ENCODE measurements at regions of chr6 and their contacts with region 1.

Region 1: GRCh38 chr6:99330159-99330558 is 19.3 kb downstream of the FAXC start:
- DNase-seq: peak; percentile 52
- ATAC-seq: peak; percentile 88
- H3K4me3 ChIP-seq: no peak overlapping the region
- H3K27ac ChIP-seq: no peak overlapping the region
- H3K4me1 ChIP-seq: peaks cover 5% of the 10 kb centered on the region; the same call in 1 of the 2 replicates
- H3K27me3 ChIP-seq: no peaks in the 10 kb centered on the region
- CTCF ChIP-seq: peak; percentile 64
- EP300 ChIP-seq: no peak
- POLR2A ChIP-seq: no peak
- RAD21 ChIP-seq: 0 out of 2 replicates have a peak, but pooled peaks have one; percentile 21

Region 2: DNA sequence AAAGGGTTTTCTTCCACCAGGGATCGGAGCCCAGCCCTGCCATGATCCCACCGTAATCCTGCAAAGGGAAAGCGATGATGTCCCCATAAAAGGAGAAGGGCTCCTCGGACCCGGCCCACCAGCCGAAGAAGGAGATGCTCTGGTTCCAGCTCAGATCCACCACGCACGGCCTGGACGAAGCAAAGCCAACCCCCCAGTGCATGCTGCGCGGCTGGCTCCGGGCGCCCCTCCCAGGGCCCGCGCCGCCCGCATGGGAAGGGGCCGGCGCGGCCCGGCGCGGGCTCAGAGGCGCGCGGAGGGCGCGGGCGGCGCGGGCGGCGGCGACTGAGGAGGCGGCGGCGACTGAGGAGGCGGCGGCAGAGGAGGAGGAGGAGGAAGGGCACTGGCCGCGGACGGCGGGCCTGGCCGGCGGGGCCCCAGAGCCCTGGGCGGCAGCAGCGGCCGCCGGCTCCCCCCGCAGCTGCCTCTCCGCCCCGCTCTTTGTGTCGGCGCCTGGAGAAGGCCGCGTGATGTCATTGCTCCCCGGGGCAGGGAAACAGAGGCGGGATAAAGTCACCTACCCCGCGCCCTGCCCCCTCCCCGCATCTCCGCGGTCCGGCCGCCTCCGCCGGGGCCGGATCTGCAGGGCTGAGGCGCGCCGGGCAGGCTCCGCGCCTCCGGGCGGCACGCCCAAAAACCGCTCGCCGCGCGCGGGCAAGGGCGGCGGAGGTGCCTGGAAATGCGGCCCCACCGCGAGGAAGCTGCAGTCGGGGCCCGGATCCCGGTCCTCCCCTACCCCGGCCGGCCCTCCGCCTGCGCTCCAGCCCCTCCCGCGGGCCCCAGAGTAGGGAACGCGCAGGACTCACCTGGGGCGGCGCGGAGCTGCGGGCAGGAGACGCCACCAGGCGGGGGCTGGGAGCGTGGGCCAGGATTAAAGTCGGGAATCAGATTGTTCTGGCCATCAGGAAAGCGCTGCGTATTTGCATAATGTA is 19.3 kb after region 1 on chr6 and contains the start of gene FAXC:
- CTCF ChIA-PET with region 1: no interaction called
- POLR2A ChIA-PET with region 1: no interaction called
- in situ Hi-C with region 1: no loop called
- intact Hi-C with region 1: loop called (anchors 1 kb)
- DNase-seq: peak; percentile 9
- ATAC-seq: peak; percentile 93
- H3K4me3 ChIP-seq: peak within 1 kb of the TSS; percentile 62 to 73 (median 64)
- H3K27ac ChIP-seq: no peak within 1 kb of the TSS
- H3K4me1 ChIP-seq: peaks cover 14% of the 10 kb centered on the region
- H3K27me3 ChIP-seq: peaks cover 0 to 34% of the 10 kb centered on the region in 2 experiments; a peak in 4 of 5 replicates
- CTCF ChIP-seq: peak; percentile 57
- EP300 ChIP-seq: no peak
- POLR2A ChIP-seq: no peak
- RAD21 ChIP-seq: no peak
- total RNA-seq, gene FAXC: 0.11 and 0.35 TPM in 2 replicates

Region 3: DNA sequence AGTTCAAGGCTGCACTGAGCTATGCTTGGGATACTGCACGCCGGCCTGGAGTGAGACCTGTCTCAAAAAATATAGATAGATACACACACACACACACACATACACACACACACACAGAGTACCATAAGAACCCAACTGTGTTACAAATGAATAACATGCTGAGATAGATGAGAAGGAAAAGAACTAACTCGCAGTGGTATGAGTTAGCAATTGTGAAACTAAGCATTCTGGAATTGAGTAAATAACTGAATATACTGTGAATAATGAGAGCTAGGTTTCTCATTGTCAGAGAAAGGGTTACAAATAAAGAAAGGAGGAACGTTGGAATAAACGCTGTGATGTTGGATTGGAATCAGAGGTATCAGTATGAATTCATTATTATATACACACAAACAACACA is 33.9 kb after region 1 on chr6:
- CTCF ChIA-PET with region 1: no interaction called
- POLR2A ChIA-PET with region 1: no interaction called
- in situ Hi-C with region 1: no loop called
- intact Hi-C with region 1: no loop called
- DNase-seq: no peak
- ATAC-seq: no peak
- H3K4me3 ChIP-seq: no peak overlapping the region
- H3K27ac ChIP-seq: no peak overlapping the region
- H3K4me1 ChIP-seq: no peaks in the 10 kb centered on the region
- H3K27me3 ChIP-seq: no peaks in the 10 kb centered on the region
- CTCF ChIP-seq: no peak
- EP300 ChIP-seq: no peak
- POLR2A ChIP-seq: no peak
- RAD21 ChIP-seq: no peak

Region 4: DNA sequence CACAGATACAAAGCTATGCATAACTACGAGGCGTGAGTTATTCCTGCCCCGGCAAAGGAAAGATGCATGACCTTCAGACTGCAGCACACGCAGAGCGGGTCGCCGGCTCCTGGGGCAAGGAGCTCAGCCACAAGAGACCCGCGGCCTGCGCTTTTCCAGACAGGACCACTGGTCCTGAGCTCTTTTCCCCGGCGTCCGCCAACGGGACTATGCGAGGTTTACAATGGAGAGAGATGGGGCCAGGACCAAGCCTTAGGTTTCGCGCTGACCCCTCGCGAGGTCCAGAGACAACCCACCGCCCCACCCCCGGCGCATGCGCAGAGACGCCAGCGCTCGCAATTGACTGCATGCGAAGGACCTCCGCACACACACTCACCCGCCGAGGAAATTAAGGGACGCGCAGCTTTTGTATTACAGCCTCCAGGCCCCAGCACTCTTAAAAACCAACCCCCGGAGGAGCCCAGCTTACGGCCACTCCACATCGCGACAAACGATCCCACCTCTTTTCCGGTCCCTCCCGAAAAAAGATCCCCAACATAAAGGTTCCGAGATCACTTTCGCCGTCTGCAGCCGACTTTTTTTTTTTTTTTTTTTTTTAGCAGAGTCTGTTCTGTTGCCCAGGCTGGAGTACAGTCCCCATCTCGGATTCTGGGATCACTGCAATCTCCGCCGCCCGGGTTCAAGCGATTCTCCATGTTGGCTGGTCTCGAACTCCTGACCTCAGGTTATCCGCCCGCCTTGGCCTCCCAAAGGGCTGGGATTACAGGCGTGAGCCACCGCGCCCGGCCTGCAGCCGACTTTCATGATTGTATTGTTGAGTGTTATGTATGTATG is 63.8 kb after region 1 on chr6 and contains the start of gene COQ3:
- CTCF ChIA-PET with region 1: no interaction called
- POLR2A ChIA-PET with region 1: no interaction called
- in situ Hi-C with region 1: no loop called
- intact Hi-C with region 1: loop called (anchors 5 kb)
- DNase-seq: peak; percentile 84
- ATAC-seq: peak; percentile 99
- H3K4me3 ChIP-seq: peak within 1 kb of the TSS; percentile 64 to 85 (median 67)
- H3K27ac ChIP-seq: peak within 1 kb of the TSS; percentile 82
- H3K4me1 ChIP-seq: peaks cover 19% of the 10 kb centered on the region
- H3K27me3 ChIP-seq: no peaks in the 10 kb centered on the region
- CTCF ChIP-seq: no peak
- EP300 ChIP-seq: no peak
- POLR2A ChIP-seq: peak; percentile 91 to 96
- RAD21 ChIP-seq: 0 out of 2 replicates have a peak, but pooled peaks have one; percentile 50
- total RNA-seq, gene COQ3: 20.5 and 26.6 TPM in 2 replicates

Region 5: GRCh38 chr6:99425647-99426453 is 95.7 kb after region 1 on chr6:
- CTCF ChIA-PET with region 1: no interaction called
- POLR2A ChIA-PET with region 1: interaction called, 11 read pairs
- in situ Hi-C with region 1: no loop called
- intact Hi-C with region 1: loop called (anchors 1 kb)
- DNase-seq: peak; percentile 91
- ATAC-seq: peak; percentile 77
- H3K4me3 ChIP-seq: peak overlapping the region; percentile 59 to 85 (median 84)
- H3K27ac ChIP-seq: peak overlapping the region; percentile 98
- H3K4me1 ChIP-seq: peaks cover 55% of the 10 kb centered on the region
- H3K27me3 ChIP-seq: no peaks in the 10 kb centered on the region; a peak in 1 of 5 replicates
- CTCF ChIP-seq: peak; percentile 73
- EP300 ChIP-seq: no peak
- POLR2A ChIP-seq: no peak
- RAD21 ChIP-seq: 0 out of 2 replicates have a peak, but pooled peaks have one; percentile 7

Region 6: DNA sequence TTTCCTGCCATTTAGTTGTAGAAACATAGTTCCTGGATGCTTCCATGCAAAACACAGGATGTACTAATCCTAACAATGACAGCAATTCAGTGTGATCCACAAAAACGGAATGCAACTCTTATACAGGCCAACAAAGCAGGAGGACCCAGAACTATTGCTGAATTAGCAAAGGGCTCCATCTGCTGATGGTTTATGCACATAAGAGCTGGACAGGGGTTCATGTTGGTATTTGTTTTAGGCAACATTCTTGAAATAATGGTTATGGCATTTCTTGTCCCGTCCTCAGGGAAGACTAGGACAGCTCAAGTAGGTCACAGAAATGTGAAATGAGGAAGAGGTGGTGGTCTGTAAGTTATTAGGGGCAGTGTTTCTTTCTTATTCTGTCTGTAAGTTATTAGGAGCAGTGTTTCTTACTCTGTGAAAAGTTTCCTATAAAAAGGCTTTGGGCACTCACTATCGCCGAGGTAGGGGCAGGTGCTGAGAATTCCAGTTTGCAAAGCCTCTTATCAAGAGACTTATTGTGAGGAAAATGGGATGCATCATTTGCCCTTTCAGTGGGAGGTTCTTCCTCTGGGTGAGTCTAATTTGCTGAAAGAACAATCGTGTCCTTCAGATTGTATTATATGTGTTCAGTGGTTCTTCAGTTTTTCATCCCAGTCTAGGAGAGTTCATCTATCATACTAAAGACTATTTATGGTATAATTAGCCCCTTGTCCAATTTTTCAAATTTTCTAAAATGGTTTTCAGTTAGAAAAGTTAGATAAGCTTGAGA is 492.8 kb after region 1 on chr6:
- CTCF ChIA-PET with region 1: no interaction called
- POLR2A ChIA-PET with region 1: no interaction called
- in situ Hi-C with region 1: loop called (anchors 25 kb)
- intact Hi-C with region 1: loop called (anchors 5 kb)
- DNase-seq: peak; percentile 64
- ATAC-seq: peak; percentile 99
- H3K4me3 ChIP-seq: peak overlapping the region in 1 of 3 experiments; percentile 23; a peak in 2 of 6 replicates
- H3K27ac ChIP-seq: no peak overlapping the region
- H3K4me1 ChIP-seq: peaks cover 7% of the 10 kb centered on the region
- H3K27me3 ChIP-seq: no peaks in the 10 kb centered on the region; a peak in 1 of 5 replicates
- CTCF ChIP-seq: peak; percentile 76
- EP300 ChIP-seq: no peak
- POLR2A ChIP-seq: no peak
- RAD21 ChIP-seq: peak; percentile 57